ENCODE measurements at regions of chr20 and their contacts with region 1.

Region 1: GRCh38 chr20:53623454-53624211 is 30.0 kb upstream of the ZNF217 start:
- DNase-seq: peak; percentile 59
- H3K4me3 ChIP-seq: peak overlapping the region; percentile 49
- H3K27ac ChIP-seq: peak overlapping the region; percentile 90
- H3K4me1 ChIP-seq: peaks cover 79% of the 10 kb centered on the region
- CTCF ChIP-seq: no peak

Region 2: GRCh38 chr20:53594068-53595017 is 29.3 kb before region 1 on chr20:
- CTCF ChIA-PET with region 1: no interaction called
- POLR2A ChIA-PET with region 1: interaction called, 9 read pairs
- intact Hi-C with region 1: loop called (anchors 2 kb)
- DNase-seq: peak; percentile 96
- H3K4me3 ChIP-seq: peak overlapping the region; percentile 100
- H3K27ac ChIP-seq: peak overlapping the region; percentile 95
- H3K4me1 ChIP-seq: peaks cover 30% of the 10 kb centered on the region
- CTCF ChIP-seq: peak; percentile 59

Region 3: GRCh38 chr20:53635221-53635924 is 11.7 kb after region 1 on chr20:
- CTCF ChIA-PET with region 1: interaction called, 4 read pairs
- POLR2A ChIA-PET with region 1: interaction called, 17 read pairs
- intact Hi-C with region 1: no loop called
- DNase-seq: no peak
- H3K4me3 ChIP-seq: no peak overlapping the region
- H3K27ac ChIP-seq: no peak overlapping the region
- H3K4me1 ChIP-seq: peaks cover 13% of the 10 kb centered on the region
- CTCF ChIP-seq: no peak

Region 4: GRCh38 chr20:53652090-53652858 is 28.6 kb after region 1 on chr20:
- CTCF ChIA-PET with region 1: no interaction called
- POLR2A ChIA-PET with region 1: interaction called, 16 read pairs
- intact Hi-C with region 1: no loop called
- DNase-seq: peak; percentile 77
- H3K4me3 ChIP-seq: peak overlapping the region; percentile 50
- H3K27ac ChIP-seq: peak overlapping the region; percentile 91
- H3K4me1 ChIP-seq: peaks cover 59% of the 10 kb centered on the region
- CTCF ChIP-seq: no peak

Region 5: DNA sequence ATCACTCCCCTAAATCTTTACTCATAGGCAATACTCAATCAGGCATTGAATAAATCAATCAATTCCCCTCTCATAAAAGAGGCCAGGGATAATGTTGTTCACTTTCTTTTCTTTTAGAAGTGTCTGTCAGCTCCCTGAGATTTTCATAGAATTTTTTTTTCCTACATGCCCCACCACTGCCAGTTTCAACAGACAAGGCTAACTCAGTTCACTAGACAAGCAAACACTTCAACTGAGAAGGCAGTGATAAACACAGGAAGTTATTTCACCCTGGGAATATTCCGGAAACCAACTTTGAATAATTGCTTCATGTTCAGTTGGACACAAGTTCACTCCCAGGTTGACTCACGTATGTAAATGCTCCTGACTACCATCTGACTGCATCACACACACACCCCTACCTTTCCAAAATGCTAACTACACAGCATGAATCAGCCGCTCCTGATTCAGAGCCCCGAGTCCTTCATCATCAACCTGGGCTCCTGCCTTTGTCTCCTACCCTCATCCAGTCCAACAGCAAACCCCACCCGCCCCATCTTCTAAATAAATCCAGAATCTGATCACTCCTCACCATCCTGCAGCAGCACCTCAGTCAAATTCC is 302.9 kb after region 1 on chr20:
- CTCF ChIA-PET with region 1: no interaction called
- POLR2A ChIA-PET with region 1: interaction called, 11 read pairs
- intact Hi-C with region 1: no loop called
- DNase-seq: peak; percentile 95
- H3K4me3 ChIP-seq: peak overlapping the region; percentile 59
- H3K27ac ChIP-seq: peak overlapping the region; percentile 99
- H3K4me1 ChIP-seq: peaks cover 95% of the 10 kb centered on the region
- CTCF ChIP-seq: no peak

Region 6: DNA sequence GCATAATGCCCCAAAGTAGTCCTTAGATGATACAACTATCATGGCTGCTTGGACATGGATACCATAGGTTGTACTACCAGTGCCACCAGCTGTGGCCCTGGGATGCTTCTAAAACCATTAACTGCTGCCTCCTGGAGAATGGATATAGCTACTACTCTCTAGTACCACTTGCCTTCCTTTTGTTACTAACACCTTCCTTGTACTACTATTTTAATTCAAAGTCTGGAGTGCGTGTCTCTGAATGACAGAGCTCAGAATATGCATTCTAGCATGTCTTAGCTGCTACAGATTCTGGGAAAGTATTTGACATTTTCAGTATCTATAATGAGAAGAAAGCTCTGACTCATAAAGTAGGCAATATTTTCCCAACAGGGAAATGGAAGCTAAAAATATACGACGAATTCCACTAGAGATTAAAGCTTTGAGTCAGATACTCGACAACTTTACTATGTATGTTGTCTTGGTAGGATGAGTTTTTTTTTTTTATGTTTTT is 696.5 kb after region 1 on chr20:
- CTCF ChIA-PET with region 1: no interaction called
- POLR2A ChIA-PET with region 1: no interaction called
- intact Hi-C with region 1: no loop called
- DNase-seq: no peak
- H3K4me3 ChIP-seq: no peak overlapping the region
- H3K27ac ChIP-seq: no peak overlapping the region
- H3K4me1 ChIP-seq: no peaks in the 10 kb centered on the region
- CTCF ChIP-seq: no peak

Measured in OCI-LY7 (cell line).